H1 (cell line): ENCODE measurements at regions of chr6 and their contacts with region 1.

Region 1: DNA sequence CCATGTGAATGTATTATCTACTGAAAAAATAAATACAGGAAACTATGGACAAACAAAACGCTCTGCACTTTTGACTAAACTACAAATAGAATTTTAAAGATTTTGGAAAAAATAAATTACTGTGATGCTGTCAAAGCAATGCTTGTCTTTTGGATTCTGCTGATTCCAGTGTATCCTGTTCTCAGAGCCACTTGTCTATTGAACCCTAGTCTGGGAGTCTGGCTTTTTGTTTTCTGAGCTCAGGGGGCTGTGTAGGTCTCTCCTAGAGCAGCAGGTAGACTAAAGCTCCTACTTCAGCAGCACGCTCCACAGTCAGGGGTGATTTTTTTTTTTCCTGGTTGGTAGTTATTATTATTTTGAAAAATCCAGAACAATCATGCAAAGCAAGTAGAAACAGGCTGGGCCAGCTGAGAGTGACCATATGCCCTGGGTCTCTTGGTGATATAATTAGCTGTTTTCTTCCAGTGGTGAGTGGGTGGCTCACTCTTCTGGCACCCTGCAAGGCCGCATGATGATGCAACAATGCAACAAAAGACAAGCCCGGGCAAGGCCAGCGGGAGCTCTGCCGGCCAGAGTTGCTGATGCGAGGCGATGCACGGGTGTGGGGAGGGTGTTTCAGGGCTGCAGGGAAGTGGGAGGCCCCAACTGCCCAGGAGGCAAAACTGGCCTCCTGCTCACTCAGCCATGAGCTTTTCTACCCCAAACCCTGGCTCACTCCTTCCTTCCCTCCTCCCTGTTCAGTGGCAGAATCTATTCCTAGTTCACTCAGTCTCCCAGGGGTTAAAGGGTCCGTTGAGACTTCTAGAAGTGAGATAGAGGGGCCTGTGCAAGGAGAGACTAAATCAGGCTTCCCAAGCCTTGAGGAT is 11.6 kb upstream of the CDKN1A start:
- DNase-seq: peak in 1 of 2 experiments; percentile 60
- H3K4me3 ChIP-seq: peak overlapping the region in 1 of 4 experiments; percentile 20; a peak in 2 of 8 replicates
- H3K27ac ChIP-seq: peak overlapping the region; percentile 70
- H3K4me1 ChIP-seq: peaks cover 2 to 23% (median 12%) of the 10 kb centered on the region in 4 experiments
- H3K27me3 ChIP-seq: no peaks in the 10 kb centered on the region
- CTCF ChIP-seq: no peak
- EP300 ChIP-seq: no peak
- POLR2A ChIP-seq: 0 out of 3 replicates have a peak, but pooled peaks of 1 of the 2 experiments have one; percentile 21
- RAD21 ChIP-seq: no peak

Region 2: DNA sequence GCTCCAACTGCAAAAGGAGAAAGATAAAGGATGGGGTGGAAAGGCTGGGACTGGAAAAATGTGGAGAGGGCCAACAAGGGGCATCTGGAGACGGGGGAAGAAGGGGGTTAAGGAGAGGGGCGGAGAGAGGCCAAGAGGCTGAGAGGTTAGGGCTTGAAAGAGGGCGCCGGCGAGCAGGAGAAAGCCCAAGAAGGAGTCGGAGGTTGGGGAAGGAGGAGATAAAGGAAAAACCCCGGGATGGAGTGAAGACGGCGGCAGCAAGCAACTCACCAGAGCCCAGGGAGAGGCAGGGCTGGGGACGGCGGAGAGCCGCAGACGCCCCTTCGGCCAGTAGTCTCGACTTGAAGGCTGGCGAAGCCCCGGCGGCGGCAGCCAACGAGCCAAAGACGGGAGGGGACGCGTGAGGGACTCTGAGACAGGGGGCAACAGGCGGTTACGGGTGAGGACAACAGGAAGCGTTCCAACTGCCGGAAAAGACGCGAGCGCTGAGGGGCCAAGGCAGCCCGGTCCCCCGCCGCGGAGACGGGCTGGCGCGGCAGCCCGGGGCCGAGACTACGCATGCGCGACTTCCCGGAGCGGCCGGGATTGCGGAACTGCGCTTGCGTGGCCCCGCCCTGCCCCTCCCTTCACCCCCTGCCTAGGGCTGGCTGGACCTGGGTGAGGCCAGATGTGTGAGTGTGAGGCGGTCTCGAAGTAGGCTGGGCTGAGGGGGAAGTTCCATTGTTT is 119.9 kb before region 1 on chr6 and contains the start of gene STK38:
- CTCF ChIA-PET with region 1: no interaction called
- POLR2A ChIA-PET with region 1: no interaction called
- DNase-seq: peak; percentile 83 to 94
- H3K4me3 ChIP-seq: peak within 1 kb of the TSS; percentile 84 to 97 (median 92)
- H3K27ac ChIP-seq: peak within 1 kb of the TSS; percentile 81
- H3K4me1 ChIP-seq: peaks cover 0 to 9% (median 4%) of the 10 kb centered on the region in 4 experiments; a peak in 4 of 7 replicates
- H3K27me3 ChIP-seq: no peaks in the 10 kb centered on the region
- CTCF ChIP-seq: no peak
- EP300 ChIP-seq: no peak
- POLR2A ChIP-seq: peak; percentile 52 to 86
- RAD21 ChIP-seq: no peak; a peak in 1 of 4 replicates
- total RNA-seq, gene STK38: 18.5 and 19.8 TPM in 2 replicates

Region 3: GRCh38 chr6:36678518-36679027 is 11.6 kb after region 1 on chr6 and contains the start of gene CDKN1A:
- CTCF ChIA-PET with region 1: interaction called, 67 read pairs
- POLR2A ChIA-PET with region 1: interaction called, 109 read pairs
- DNase-seq: peak in 1 of 2 experiments; percentile 84
- H3K4me3 ChIP-seq: peak within 1 kb of the TSS; percentile 55 to 76 (median 69)
- H3K27ac ChIP-seq: no peak within 1 kb of the TSS; the same call in 1 of the 2 replicates
- H3K4me1 ChIP-seq: peaks cover 5 to 36% (median 16%) of the 10 kb centered on the region in 4 experiments
- H3K27me3 ChIP-seq: peaks cover 6 to 28% (median 20%) of the 10 kb centered on the region in 4 experiments
- CTCF ChIP-seq: no peak
- EP300 ChIP-seq: no peak
- POLR2A ChIP-seq: peak in 1 of 2 experiments; percentile 82; a peak in 2 of 3 replicates
- RAD21 ChIP-seq: no peak
- total RNA-seq, gene CDKN1A: 14.5 and 15.2 TPM in 2 replicates